HepG2 (cell line): ENCODE measurements at regions of chr1 and their contacts with region 1.

Region 1: DNA sequence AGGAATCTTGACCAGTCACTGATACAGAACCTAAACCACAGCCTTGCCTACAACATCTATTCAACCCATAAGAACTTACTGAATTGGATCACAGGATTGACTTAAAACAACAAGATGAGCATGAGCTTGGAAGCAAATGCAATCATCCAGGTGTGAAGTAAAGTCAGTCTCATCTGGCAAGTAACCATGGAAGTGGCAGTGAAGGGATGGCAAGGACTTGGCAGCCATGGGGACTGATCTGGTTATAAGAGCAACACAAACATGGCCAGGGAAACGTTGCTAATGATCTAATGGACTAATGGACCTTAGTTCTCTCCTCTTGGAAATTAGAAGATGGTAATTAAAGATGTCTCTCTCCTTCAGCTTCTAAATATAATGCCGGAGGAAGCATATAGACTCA is 133.1 kb downstream of the VAV3 start:
- DNase-seq: no peak
- ATAC-seq: no peak
- H3K4me3 ChIP-seq: no peak overlapping the region
- H3K27ac ChIP-seq: no peak overlapping the region
- H3K4me1 ChIP-seq: no peaks in the 10 kb centered on the region
- H3K27me3 ChIP-seq: no peaks in the 10 kb centered on the region
- CTCF ChIP-seq: no peak
- EP300 ChIP-seq: no peak
- POLR2A ChIP-seq: no peak
- RAD21 ChIP-seq: no peak

Region 2: DNA sequence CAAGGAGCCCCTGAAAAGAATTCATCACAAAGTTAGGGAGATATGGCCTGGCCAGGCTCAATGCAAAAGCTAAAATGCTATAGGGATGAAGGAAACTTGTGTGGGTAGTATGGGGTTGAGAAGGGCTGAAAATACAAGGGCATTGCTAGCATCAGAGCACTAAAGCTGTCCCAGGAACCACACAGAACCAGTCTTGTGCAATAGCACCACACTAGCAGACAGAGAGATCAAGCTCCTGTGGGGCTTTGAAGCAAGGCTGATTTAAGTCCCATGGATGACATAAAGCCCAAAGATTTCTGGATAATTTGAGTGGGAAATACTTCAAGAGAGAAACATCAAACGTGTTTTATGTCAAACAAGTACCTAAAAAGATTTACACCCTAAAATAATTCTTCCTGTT is 36.0 kb after region 1 on chr1:
- CTCF ChIA-PET with region 1: no interaction called
- POLR2A ChIA-PET with region 1: no interaction called
- in situ Hi-C with region 1: no loop called
- intact Hi-C with region 1: loop called (anchors 1 kb)
- DNase-seq: no peak
- ATAC-seq: no peak
- H3K4me3 ChIP-seq: no peak overlapping the region
- H3K27ac ChIP-seq: no peak overlapping the region
- H3K4me1 ChIP-seq: no peaks in the 10 kb centered on the region
- H3K27me3 ChIP-seq: no peaks in the 10 kb centered on the region
- CTCF ChIP-seq: no peak
- EP300 ChIP-seq: no peak
- POLR2A ChIP-seq: no peak
- RAD21 ChIP-seq: no peak